ENCODE measurements at regions of chr12 and their contacts with region 1.

Region 1: DNA sequence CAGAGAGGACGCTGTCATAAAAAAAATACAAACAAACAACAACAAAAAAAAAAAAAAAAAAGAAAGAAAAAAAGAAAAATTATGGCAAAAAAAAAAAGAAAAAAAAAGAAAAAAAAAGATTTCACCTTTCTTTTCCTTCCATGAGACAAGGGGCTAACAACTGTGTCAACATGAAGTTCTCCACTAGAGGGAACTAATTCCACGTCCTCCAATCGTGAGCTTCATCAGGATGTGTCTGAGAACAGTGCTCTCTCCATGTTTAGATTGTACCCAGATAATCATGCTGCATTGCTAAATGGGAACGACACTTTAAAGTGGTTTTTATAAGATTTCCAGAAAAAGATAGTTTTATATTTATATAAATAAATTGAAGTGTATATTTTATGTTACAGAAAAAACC is 96.2 kb upstream of the PTPRB start:
- DNase-seq: peak; percentile 71
- H3K4me3 ChIP-seq: no peak overlapping the region
- H3K27ac ChIP-seq: no peak overlapping the region
- H3K4me1 ChIP-seq: no peaks in the 10 kb centered on the region
- H3K27me3 ChIP-seq: peaks cover 0 to 7% of the 10 kb centered on the region in 2 experiments
- CTCF ChIP-seq: peak; percentile 51 to 63
- POLR2A ChIP-seq: no peak

Region 2: GRCh38 chr12:69779928-69780327 is 953.5 kb before region 1 on chr12:
- CTCF ChIA-PET with region 1: interaction called, 23 read pairs
- POLR2A ChIA-PET with region 1: no interaction called
- dilution Hi-C with region 1: no loop called
- intact Hi-C with region 1: loop called (anchors 5 kb)
- DNase-seq: peak; percentile 67
- H3K4me3 ChIP-seq: no peak overlapping the region
- H3K27ac ChIP-seq: no peak overlapping the region
- H3K4me1 ChIP-seq: no peaks in the 10 kb centered on the region
- H3K27me3 ChIP-seq: no peaks in the 10 kb centered on the region
- CTCF ChIP-seq: peak; percentile 58 to 73
- POLR2A ChIP-seq: no peak

Region 3: GRCh38 chr12:70227911-70228310 is 505.5 kb before region 1 on chr12:
- CTCF ChIA-PET with region 1: no interaction called
- POLR2A ChIA-PET with region 1: no interaction called
- dilution Hi-C with region 1: no loop called
- intact Hi-C with region 1: no loop called
- DNase-seq: no peak
- H3K4me3 ChIP-seq: no peak overlapping the region
- H3K27ac ChIP-seq: no peak overlapping the region
- H3K4me1 ChIP-seq: no peaks in the 10 kb centered on the region
- H3K27me3 ChIP-seq: no peaks in the 10 kb centered on the region
- CTCF ChIP-seq: no peak
- POLR2A ChIP-seq: no peak

Region 4: DNA sequence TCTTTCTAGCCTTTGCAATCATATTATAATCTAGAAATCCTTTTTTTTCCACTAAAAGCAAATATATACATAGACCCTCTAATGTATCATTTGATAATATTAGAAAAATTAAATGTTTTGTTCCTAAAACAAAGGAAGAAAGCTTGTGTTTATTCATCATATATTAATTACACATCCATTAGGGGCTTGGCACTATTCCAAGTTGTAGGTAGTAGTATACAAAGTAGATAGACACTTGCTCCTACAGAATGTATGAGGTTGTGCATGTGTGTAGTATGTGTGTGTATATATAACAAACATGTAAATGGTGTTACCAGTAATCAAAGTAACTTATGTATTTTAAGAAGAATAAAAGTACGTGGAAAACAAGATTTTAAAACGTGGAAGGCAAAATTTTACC is 382.3 kb before region 1 on chr12:
- CTCF ChIA-PET with region 1: no interaction called
- POLR2A ChIA-PET with region 1: no interaction called
- dilution Hi-C with region 1: no loop called
- intact Hi-C with region 1: no loop called
- DNase-seq: no peak
- H3K4me3 ChIP-seq: no peak overlapping the region
- H3K27ac ChIP-seq: no peak overlapping the region
- H3K4me1 ChIP-seq: no peaks in the 10 kb centered on the region
- H3K27me3 ChIP-seq: no peaks in the 10 kb centered on the region
- CTCF ChIP-seq: no peak
- POLR2A ChIP-seq: no peak

Region 5: DNA sequence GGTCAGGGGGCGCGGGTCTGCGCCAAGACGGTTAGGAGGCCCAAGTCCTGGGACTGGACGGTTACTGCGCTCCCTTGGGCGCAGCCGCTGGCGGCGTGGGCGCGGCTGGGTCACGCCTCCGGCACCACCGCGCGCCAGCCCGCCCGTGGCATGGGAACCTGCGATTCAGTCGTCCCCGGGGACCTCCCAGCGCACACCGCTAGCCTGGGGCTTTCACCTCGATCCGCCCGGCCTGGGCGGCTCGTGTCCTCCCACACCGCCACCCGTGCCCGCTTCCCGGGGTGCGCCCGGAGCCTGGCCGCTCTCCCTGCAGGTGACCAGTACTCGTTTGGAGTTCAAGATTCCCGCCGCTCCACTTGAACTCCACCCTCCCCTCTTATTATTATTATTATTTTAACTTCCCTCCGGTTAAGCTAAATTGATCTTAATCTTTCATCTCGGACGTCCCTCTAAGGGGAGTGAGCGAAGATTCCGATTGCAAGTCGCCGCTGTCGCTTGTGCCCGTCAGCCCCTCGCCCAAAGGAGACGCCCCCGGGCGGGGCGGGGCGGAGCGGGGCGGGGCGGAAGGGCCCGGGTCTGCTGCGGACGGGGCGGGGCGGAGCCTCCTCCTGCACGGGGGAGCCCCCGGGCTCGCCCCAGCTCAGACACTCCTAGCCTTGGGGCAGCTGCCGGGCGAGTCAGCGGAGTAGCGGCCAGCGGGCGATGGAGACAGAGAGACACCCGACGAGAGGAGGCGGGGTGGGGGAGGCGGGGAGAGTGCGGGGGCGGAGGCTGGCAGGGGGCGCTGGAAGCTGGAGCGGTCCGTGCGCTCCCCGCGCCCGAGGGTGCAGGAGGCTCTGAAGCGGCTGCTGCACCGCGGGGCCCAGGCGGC is 367.5 kb before region 1 on chr12 and contains the start of gene KCNMB4:
- CTCF ChIA-PET with region 1: no interaction called
- POLR2A ChIA-PET with region 1: no interaction called
- dilution Hi-C with region 1: no loop called
- intact Hi-C with region 1: loop called (anchors 2 kb)
- DNase-seq: peak; percentile 51
- H3K4me3 ChIP-seq: peak within 1 kb of the TSS; percentile 60 to 67 (median 64)
- H3K27ac ChIP-seq: no peak within 1 kb of the TSS
- H3K4me1 ChIP-seq: peaks cover 14% of the 10 kb centered on the region
- H3K27me3 ChIP-seq: peaks cover 16 to 33% of the 10 kb centered on the region in 2 experiments
- CTCF ChIP-seq: no peak
- POLR2A ChIP-seq: no peak
- total RNA-seq, gene KCNMB4: 0.97 and 2.1 TPM in 2 replicates

Region 6: DNA sequence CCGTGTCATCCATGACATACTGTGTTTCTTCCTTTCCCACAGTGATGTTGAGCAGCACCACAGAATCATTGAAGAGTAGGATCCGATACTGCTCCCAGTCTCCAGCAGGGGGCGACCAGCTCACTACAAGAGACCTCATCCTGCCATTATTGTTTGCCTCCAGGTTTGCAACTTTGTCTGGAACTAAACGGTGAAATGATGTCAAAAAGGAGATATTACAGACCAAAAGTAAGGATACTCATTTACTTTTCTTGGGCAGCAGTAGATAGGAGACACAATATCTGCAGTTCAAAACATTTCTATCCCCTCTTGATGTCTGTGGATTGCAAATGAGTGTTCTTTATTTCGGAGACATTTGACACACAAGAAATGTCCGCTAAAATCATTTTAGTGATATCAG is 143.3 kb before region 1 on chr12:
- CTCF ChIA-PET with region 1: interaction called, 12 read pairs
- POLR2A ChIA-PET with region 1: no interaction called
- dilution Hi-C with region 1: no loop called
- intact Hi-C with region 1: no loop called
- DNase-seq: peak; percentile 80
- H3K4me3 ChIP-seq: no peak overlapping the region
- H3K27ac ChIP-seq: no peak overlapping the region
- H3K4me1 ChIP-seq: no peaks in the 10 kb centered on the region
- H3K27me3 ChIP-seq: no peaks in the 10 kb centered on the region
- CTCF ChIP-seq: peak; percentile 82 to 88
- POLR2A ChIP-seq: no peak

Region 7: DNA sequence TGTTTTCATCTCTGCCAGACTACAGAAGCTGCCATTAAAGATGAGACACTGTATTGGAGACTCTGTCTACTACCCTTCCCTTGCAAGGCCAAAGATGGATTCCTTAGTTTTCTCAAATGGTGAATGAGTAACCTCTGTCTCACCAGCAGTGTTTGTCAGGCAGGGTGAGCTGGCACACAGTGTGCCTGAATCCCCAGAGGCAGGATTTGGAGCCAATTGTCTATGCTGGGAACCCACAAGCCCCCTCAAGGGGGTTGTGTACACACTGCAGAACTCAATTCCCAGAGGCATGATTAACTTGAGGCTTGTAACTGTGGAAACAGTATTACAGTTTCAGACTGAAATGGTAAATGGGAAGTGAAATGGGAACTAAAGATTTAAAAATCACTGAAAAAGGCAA is 40.7 kb after region 1 on chr12:
- CTCF ChIA-PET with region 1: no interaction called
- POLR2A ChIA-PET with region 1: no interaction called
- dilution Hi-C with region 1: no loop called
- intact Hi-C with region 1: no loop called
- DNase-seq: no peak
- H3K4me3 ChIP-seq: no peak overlapping the region
- H3K27ac ChIP-seq: no peak overlapping the region
- H3K4me1 ChIP-seq: no peaks in the 10 kb centered on the region
- H3K27me3 ChIP-seq: peaks cover 0 to 7% of the 10 kb centered on the region in 2 experiments
- CTCF ChIP-seq: no peak
- POLR2A ChIP-seq: no peak

Region 8: GRCh38 chr12:71014180-71014785 is 280.9 kb after region 1 on chr12:
- CTCF ChIA-PET with region 1: interaction called, 16 read pairs
- POLR2A ChIA-PET with region 1: no interaction called
- dilution Hi-C with region 1: no loop called
- intact Hi-C with region 1: loop called (anchors 1 kb)
- DNase-seq: peak; percentile 13
- H3K4me3 ChIP-seq: no peak overlapping the region
- H3K27ac ChIP-seq: no peak overlapping the region
- H3K4me1 ChIP-seq: no peaks in the 10 kb centered on the region
- H3K27me3 ChIP-seq: no peaks in the 10 kb centered on the region
- CTCF ChIP-seq: no peak
- POLR2A ChIP-seq: no peak

Region 9: DNA sequence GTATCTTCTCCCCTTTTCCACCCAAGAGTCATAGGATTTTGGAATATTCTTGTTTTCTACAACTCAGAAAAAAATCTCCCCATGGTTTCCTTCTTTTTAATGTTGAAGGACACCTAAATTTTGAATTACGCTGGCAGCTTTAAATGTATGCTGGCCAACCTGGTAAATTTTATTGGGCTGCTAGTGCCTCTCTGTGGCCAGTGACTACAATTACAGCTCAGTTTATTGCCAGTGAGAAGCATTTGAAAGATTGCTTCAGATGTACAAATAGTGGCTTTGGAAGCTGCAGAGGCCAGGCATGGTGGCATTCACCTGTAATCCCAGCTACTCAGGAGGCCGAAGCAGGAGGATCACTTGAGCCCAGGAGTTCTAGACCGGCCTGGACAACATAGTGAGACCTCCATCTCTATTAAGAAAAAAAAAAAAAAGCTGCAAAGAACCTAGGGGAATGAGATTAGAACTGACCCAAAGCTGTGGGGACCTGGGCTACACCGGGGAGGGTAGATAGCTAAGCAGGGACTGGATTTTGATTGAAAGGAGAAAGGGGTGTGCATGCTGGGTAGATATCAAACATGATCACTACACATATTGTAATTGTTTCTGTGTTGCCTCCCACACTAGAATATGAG is 1013.7 kb after region 1 on chr12:
- CTCF ChIA-PET with region 1: interaction called, 26 read pairs
- POLR2A ChIA-PET with region 1: no interaction called
- dilution Hi-C with region 1: no loop called
- intact Hi-C with region 1: loop called (anchors 2 kb)
- DNase-seq: peak; percentile 66
- H3K4me3 ChIP-seq: no peak overlapping the region
- H3K27ac ChIP-seq: no peak overlapping the region
- H3K4me1 ChIP-seq: no peaks in the 10 kb centered on the region
- H3K27me3 ChIP-seq: peaks cover 15 to 36% of the 10 kb centered on the region in 2 experiments
- CTCF ChIP-seq: peak; percentile 45 to 62
- POLR2A ChIP-seq: no peak

Measured in endothelial cell of umbilical vein (primary cell).